ENCODE measurements at regions of chr3 and their contacts with region 1.

Region 1: GRCh38 chr3:115092220-115092791 is 54.8 kb downstream of the ZBTB20 start:
- DNase-seq: peak; percentile 70
- H3K4me3 ChIP-seq: no peak overlapping the region
- H3K27ac ChIP-seq: no peak overlapping the region
- H3K4me1 ChIP-seq: no peaks in the 10 kb centered on the region
- H3K27me3 ChIP-seq: no peaks in the 10 kb centered on the region
- CTCF ChIP-seq: peak; percentile 29 to 77
- POLR2A ChIP-seq: no peak

Region 2: GRCh38 chr3:114527036-114527644 is 565.2 kb before region 1 on chr3:
- CTCF ChIA-PET with region 1: interaction called, 6 read pairs
- POLR2A ChIA-PET with region 1: no interaction called
- dilution Hi-C with region 1: no loop called
- intact Hi-C with region 1: loop called (anchors 10 kb)
- DNase-seq: peak; percentile 37
- H3K4me3 ChIP-seq: no peak overlapping the region
- H3K27ac ChIP-seq: no peak overlapping the region
- H3K4me1 ChIP-seq: no peaks in the 10 kb centered on the region
- H3K27me3 ChIP-seq: no peaks in the 10 kb centered on the region
- CTCF ChIP-seq: peak; percentile 39 to 43
- POLR2A ChIP-seq: no peak

Region 3: GRCh38 chr3:115040673-115041286 is 51.5 kb before region 1 on chr3:
- CTCF ChIA-PET with region 1: interaction called, 24 read pairs
- POLR2A ChIA-PET with region 1: no interaction called
- dilution Hi-C with region 1: no loop called
- intact Hi-C with region 1: loop called (anchors 1 kb)
- DNase-seq: peak; percentile 67
- H3K4me3 ChIP-seq: no peak overlapping the region
- H3K27ac ChIP-seq: no peak overlapping the region
- H3K4me1 ChIP-seq: no peaks in the 10 kb centered on the region
- H3K27me3 ChIP-seq: no peaks in the 10 kb centered on the region
- CTCF ChIP-seq: peak; percentile 58 to 59
- POLR2A ChIP-seq: no peak

Region 4: GRCh38 chr3:115255197-115255585 is 162.9 kb after region 1 on chr3:
- CTCF ChIA-PET with region 1: no interaction called
- POLR2A ChIA-PET with region 1: no interaction called
- dilution Hi-C with region 1: no loop called
- intact Hi-C with region 1: no loop called
- DNase-seq: no peak
- H3K4me3 ChIP-seq: no peak overlapping the region
- H3K27ac ChIP-seq: no peak overlapping the region
- H3K4me1 ChIP-seq: peaks cover 10% of the 10 kb centered on the region
- H3K27me3 ChIP-seq: no peaks in the 10 kb centered on the region
- CTCF ChIP-seq: no peak
- POLR2A ChIP-seq: no peak

Region 5: GRCh38 chr3:115692887-115693524 is 600.7 kb after region 1 on chr3:
- CTCF ChIA-PET with region 1: interaction called, 10 read pairs
- POLR2A ChIA-PET with region 1: no interaction called
- dilution Hi-C with region 1: no loop called
- intact Hi-C with region 1: loop called (anchors 1 kb)
- DNase-seq: peak; percentile 72
- H3K4me3 ChIP-seq: no peak overlapping the region
- H3K27ac ChIP-seq: no peak overlapping the region
- H3K4me1 ChIP-seq: no peaks in the 10 kb centered on the region
- H3K27me3 ChIP-seq: no peaks in the 10 kb centered on the region
- CTCF ChIP-seq: peak; percentile 75 to 77
- POLR2A ChIP-seq: no peak

Measured in endothelial cell of umbilical vein (primary cell).